Caco-2 (cell line): ENCODE measurements at regions of chr14 and their contacts with region 1.

Region 1: DNA sequence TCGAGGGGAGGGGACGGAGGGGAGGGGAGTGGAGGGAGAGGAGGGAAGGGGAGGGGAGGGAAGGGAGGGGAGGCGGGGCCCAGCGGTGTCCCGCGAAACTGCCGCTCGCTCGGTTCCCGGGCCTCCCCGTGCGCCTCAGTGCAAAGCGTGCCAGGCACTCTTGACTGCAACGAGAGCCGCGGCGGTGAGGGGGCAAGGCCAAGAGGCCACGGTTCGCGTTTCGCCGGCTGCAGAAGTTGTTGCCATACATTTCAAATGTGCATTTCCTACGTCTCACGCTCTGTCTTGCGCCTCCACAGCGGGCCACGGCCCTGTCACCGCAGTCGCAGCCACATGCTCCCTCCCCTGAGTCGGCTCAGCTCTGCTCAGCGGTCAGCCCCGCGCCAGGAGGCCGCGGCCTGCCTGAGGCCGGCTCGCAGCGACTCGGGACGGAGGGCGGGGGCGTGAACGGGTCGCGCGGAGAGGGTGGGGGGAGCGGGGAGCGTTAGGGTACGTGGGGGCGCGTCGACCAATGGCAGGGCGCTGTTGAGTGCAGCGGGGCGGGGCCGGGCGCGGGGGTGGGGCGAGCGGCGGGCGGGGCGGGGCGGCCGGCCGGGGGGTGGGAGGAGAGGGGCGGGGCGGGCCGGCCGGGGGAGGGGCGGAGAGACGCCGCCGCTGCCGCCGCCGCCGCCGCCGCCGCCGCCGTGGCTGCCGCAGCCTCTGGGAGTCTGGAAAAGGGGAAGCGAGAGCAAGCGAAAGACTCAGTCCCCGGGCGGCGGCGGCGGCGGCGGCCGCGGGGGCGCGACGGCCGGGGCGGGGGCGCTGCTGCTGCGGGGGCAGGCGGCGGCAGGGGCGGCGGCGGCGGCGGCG is at the start of gene PPP2R5C:
- DNase-seq: peak; percentile 88 to 92
- H3K4me3 ChIP-seq: peak within 1 kb of the TSS; percentile 89
- H3K4me3 Mint-ChIP-seq: peak within 1 kb of the TSS; percentile 76
- H3K27ac Mint-ChIP-seq: no peak within 1 kb of the TSS
- H3K4me1 ChIP-seq: 0 out of 2 replicates have a peak, but pooled peaks cover 3% of the 10 kb centered on the region
- H3K4me1 Mint-ChIP-seq: no peaks in the 10 kb centered on the region
- H3K27me3 ChIP-seq: no peaks in the 10 kb centered on the region
- H3K27me3 Mint-ChIP-seq: peaks cover 12% of the 10 kb centered on the region
- CTCF ChIP-seq: no peak
- total RNA-seq, gene PPP2R5C: 86.8 and 97.5 TPM in 2 replicates

Region 2: GRCh38 chr14:101707068-101707842 is 54.0 kb before region 1 on chr14:
- CTCF ChIA-PET with region 1: interaction called, 6 read pairs
- POLR2A ChIA-PET with region 1: no interaction called
- intact Hi-C with region 1: loop called (anchors 2 kb)
- DNase-seq: peak; percentile 50 to 72
- H3K4me3 ChIP-seq: no peak overlapping the region
- H3K4me3 Mint-ChIP-seq: no peak overlapping the region
- H3K27ac Mint-ChIP-seq: no peak overlapping the region
- H3K4me1 ChIP-seq: 0 out of 2 replicates have a peak, but pooled peaks cover 4% of the 10 kb centered on the region
- H3K4me1 Mint-ChIP-seq: no peaks in the 10 kb centered on the region
- H3K27me3 ChIP-seq: no peaks in the 10 kb centered on the region
- H3K27me3 Mint-ChIP-seq: peaks cover 4% of the 10 kb centered on the region
- CTCF ChIP-seq: peak; percentile 60 to 82

Region 3: GRCh38 chr14:101809671-101810514 is 48.6 kb after region 1 on chr14:
- CTCF ChIA-PET with region 1: interaction called, 4 read pairs
- POLR2A ChIA-PET with region 1: interaction called, 36 read pairs
- intact Hi-C with region 1: loop called (anchors 2 kb)
- DNase-seq: peak; percentile 87 to 89
- H3K4me3 ChIP-seq: peak overlapping the region; percentile 40
- H3K4me3 Mint-ChIP-seq: peak overlapping the region; percentile 97
- H3K27ac Mint-ChIP-seq: peak overlapping the region; percentile 99
- H3K4me1 ChIP-seq: peaks cover 12% of the 10 kb centered on the region; the same call in 1 of the 2 replicates
- H3K4me1 Mint-ChIP-seq: peaks cover 5% of the 10 kb centered on the region
- H3K27me3 ChIP-seq: no peaks in the 10 kb centered on the region
- H3K27me3 Mint-ChIP-seq: no peaks in the 10 kb centered on the region
- CTCF ChIP-seq: no peak

Region 4: DNA sequence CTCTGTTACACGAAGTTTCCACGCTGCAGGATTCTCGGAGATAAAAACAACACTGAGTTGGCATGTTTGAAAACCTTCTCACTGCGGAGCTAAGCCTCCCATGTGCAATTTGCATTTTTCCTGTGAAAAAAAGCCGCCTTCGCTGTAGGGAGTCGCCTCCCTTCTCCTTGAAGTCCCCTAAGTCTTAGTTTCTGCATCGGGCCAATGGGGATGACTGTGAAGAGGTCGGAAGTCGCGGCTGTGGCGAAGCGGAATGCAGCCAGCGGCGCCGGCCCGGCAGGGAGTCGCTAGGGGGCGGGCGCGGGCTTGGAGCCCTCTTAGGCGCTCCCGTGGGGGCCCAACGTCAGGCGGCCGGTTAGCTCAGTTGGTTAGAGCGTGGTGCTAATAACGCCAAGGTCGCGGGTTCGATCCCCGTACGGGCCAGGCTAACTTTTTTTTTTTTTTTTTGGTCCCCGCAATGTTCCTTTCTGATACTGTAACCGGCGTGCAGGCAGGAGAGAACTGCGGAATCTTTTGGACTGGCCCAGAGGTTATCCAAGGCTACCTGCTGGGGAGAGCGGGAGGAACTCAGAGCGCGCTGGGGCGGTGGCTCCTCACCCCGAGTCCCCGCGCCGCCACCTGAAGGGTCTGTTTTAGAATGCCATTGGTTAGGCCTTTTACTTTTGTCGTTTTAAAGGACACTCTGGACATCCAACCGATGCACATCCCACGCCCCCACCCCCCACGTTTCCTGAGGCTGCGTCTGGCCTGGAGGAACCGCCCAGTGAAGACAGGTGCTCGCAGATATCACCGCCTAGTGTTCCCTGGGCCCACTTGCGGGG is 555.7 kb after region 1 on chr14:
- CTCF ChIA-PET with region 1: no interaction called
- POLR2A ChIA-PET with region 1: no interaction called
- intact Hi-C with region 1: no loop called
- DNase-seq: peak; percentile 93 to 96
- H3K4me3 ChIP-seq: peak overlapping the region; percentile 55
- H3K4me3 Mint-ChIP-seq: peak overlapping the region; percentile 89
- H3K27ac Mint-ChIP-seq: peak overlapping the region; percentile 94
- H3K4me1 ChIP-seq: peaks cover 30% of the 10 kb centered on the region
- H3K4me1 Mint-ChIP-seq: peaks cover 32% of the 10 kb centered on the region
- H3K27me3 ChIP-seq: no peaks in the 10 kb centered on the region
- H3K27me3 Mint-ChIP-seq: no peaks in the 10 kb centered on the region
- CTCF ChIP-seq: peak; percentile 72 to 88